Gastrocnemius medialis (tissue), 4 donors: ENCODE measurements at regions of chr2 and their contacts with region 1.

Region 1: GRCh38 chr2:70977605-70978205 is 725 bp upstream of the ANKRD53 start:
- DNase-seq: peak in 1 of 2 donors; percentile 34
- ATAC-seq: peak; percentile 42 to 51
- H3K4me3 ChIP-seq: peak overlapping the region; percentile 53 to 73 (median 66)
- H3K27ac ChIP-seq: peak overlapping the region; percentile 64 to 81 (median 68)
- H3K4me1 ChIP-seq: peaks cover 4 to 11% of the 10 kb centered on the region in 2 donors
- H3K27me3 ChIP-seq: peaks cover 0 to 6% (median 0%) of the 10 kb centered on the region in 3 donors
- CTCF ChIP-seq: no peak
- POLR2A ChIP-seq: no peak

Region 2: GRCh38 chr2:70861777-70862625 is 115.7 kb before region 1 on chr2:
- in situ Hi-C with region 1: no loop called
- intact Hi-C with region 1: loop called (anchors 1 kb)
- DNase-seq: peak; percentile 46 to 61
- ATAC-seq: peak; percentile 91 to 94
- H3K4me3 ChIP-seq: peak overlapping the region in 2 of 4 donors; percentile 3 to 4
- H3K27ac ChIP-seq: no peak overlapping the region
- H3K4me1 ChIP-seq: peaks cover 10 to 12% of the 10 kb centered on the region in 2 donors
- H3K27me3 ChIP-seq: peaks cover 0 to 16% (median 7%) of the 10 kb centered on the region in 3 donors
- CTCF ChIP-seq: peak; percentile 79 to 97 (median 86)
- POLR2A ChIP-seq: no peak

Region 3: GRCh38 chr2:70907130-70908057 is 70.3 kb before region 1 on chr2:
- in situ Hi-C with region 1: no loop called
- intact Hi-C with region 1: no loop called
- DNase-seq: no peak
- ATAC-seq: no peak
- H3K4me3 ChIP-seq: peak overlapping the region in 2 of 4 donors; percentile 3 to 32
- H3K27ac ChIP-seq: no peak overlapping the region
- H3K4me1 ChIP-seq: no peaks in the 10 kb centered on the region
- H3K27me3 ChIP-seq: peaks cover 38 to 82% (median 42%) of the 10 kb centered on the region in 3 donors
- CTCF ChIP-seq: no peak
- POLR2A ChIP-seq: no peak

Region 4: GRCh38 chr2:71409611-71410010 is 431.9 kb after region 1 on chr2:
- in situ Hi-C with region 1: no loop called
- intact Hi-C with region 1: no loop called
- DNase-seq: no peak
- ATAC-seq: no peak
- H3K4me3 ChIP-seq: no peak overlapping the region
- H3K27ac ChIP-seq: peak overlapping the region in 3 of 4 donors; percentile 7 to 57 (median 35)
- H3K4me1 ChIP-seq: no peaks in the 10 kb centered on the region
- H3K27me3 ChIP-seq: no peaks in the 10 kb centered on the region
- CTCF ChIP-seq: no peak
- POLR2A ChIP-seq: no peak